ENCODE measurements at regions of chr14 and their contacts with region 1.

Region 1: DNA sequence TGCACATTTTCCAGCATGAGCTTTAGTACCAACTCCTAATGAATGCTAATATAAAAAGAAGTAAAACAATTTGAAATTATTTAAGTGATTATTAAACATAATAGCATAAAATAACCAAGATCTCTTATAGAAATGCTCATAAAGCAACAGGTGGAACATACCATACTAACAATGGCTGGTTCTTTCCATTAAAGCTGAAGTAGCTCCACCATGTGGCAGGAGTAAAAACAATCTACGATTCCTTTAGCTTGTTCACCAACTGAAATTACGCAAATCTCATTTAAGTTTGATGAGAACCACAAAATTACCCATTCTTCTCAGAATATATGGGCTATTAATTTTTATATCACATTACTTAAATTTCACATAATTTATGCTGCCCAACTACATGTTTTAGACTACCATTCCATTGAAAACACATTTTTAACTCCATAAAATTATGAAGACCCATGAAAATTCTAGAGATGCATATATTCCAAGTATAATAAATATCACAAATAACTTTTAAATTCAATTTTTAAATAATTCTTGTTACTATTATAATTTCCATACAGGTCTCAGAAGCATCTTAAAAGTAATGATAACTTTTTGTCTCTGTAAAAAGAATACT is 213.6 kb downstream of the DAD1 start:
- DNase-seq: peak; percentile 33
- ATAC-seq: peak; percentile 71; the same call in 1 of the 2 replicates
- H3K4me3 ChIP-seq: no peak overlapping the region
- H3K27ac ChIP-seq: no peak overlapping the region
- H3K4me1 ChIP-seq: no peaks in the 10 kb centered on the region
- H3K27me3 ChIP-seq: no peaks in the 10 kb centered on the region; the same call in 1 of the 2 replicates
- CTCF ChIP-seq: peak; percentile 59; the same call in 1 of the 2 replicates

Region 2: DNA sequence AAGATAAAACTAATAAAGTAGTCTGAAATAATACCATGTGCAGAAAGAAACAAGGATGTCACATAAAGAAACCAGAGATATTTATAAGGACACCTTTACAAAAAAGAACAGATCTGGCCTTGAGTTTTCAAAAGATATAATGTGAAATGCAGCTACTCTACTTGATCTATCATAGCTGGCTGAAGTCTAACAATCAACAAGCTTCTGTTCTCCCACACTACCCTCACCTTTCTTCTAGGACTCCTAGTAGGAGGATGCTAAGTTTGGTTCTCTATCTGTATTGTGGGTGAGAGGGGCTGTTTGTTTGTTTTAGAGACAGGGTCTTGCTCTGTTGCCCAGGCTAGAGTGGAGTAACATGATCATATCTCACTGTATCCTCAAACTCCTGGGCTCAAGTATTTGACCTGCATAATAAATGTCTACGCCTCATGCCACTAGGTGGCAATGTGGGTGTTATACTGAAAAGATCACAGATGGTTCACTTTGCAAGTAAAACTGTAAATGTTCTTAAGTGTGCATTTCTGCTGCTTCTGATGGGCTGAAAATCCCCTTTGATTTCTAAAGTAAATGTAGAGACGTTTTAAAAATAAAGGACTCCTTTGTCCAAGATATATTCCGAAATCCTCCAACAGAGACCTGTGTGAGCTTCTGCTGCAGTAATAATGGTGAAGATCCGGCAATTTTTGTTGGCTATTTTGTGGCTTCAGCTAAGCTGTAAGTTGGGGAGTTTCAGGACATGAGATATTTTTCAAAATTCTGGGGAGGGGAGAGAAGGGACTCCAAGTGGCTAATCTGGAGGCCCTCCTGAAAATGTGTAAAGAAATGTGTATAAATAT is 55.7 kb before region 1 on chr14:
- CTCF ChIA-PET with region 1: interaction called, 23 read pairs
- POLR2A ChIA-PET with region 1: no interaction called
- in situ Hi-C with region 1: no loop called
- intact Hi-C with region 1: loop called (anchors 1 kb)
- DNase-seq: no peak
- ATAC-seq: peak; percentile 87
- H3K4me3 ChIP-seq: no peak overlapping the region
- H3K27ac ChIP-seq: no peak overlapping the region
- H3K4me1 ChIP-seq: no peaks in the 10 kb centered on the region
- H3K27me3 ChIP-seq: no peaks in the 10 kb centered on the region; the same call in 1 of the 2 replicates
- CTCF ChIP-seq: peak; percentile 70

Region 3: GRCh38 chr14:22852940-22853767 is 477.7 kb after region 1 on chr14:
- CTCF ChIA-PET with region 1: no interaction called
- POLR2A ChIA-PET with region 1: no interaction called
- in situ Hi-C with region 1: no loop called
- intact Hi-C with region 1: no loop called
- DNase-seq: no peak
- ATAC-seq: peak; percentile 95
- H3K4me3 ChIP-seq: peak overlapping the region; percentile 33 to 69
- H3K27ac ChIP-seq: peak overlapping the region; percentile 63; the same call in 1 of the 2 replicates
- H3K4me1 ChIP-seq: no peaks in the 10 kb centered on the region
- H3K27me3 ChIP-seq: no peaks in the 10 kb centered on the region
- CTCF ChIP-seq: peak; percentile 89

Measured in Panc1 (cell line).